ENCODE measurements at regions of chr5 and their contacts with region 1.

Region 1: GRCh38 chr5:140710899-140711552 is 10.8 kb downstream of the ZMAT2 start:
- DNase-seq: peak; percentile 90 to 98 (median 95)
- H3K4me3 ChIP-seq: peak overlapping the region; percentile 85 to 96 (median 86)
- H3K4me3 Mint-ChIP-seq: peak overlapping the region; percentile 90 to 95
- H3K27ac ChIP-seq: peak overlapping the region; percentile 85 to 86
- H3K27ac Mint-ChIP-seq: peak overlapping the region; percentile 85 to 99 (median 98)
- H3K4me1 ChIP-seq: peaks cover 5 to 13% of the 10 kb centered on the region in 2 donors
- H3K4me1 Mint-ChIP-seq: peaks cover 13% of the 10 kb centered on the region
- H3K27me3 ChIP-seq: no peaks in the 10 kb centered on the region
- H3K27me3 Mint-ChIP-seq: peaks cover 1 to 7% (median 5%) of the 10 kb centered on the region in 3 donors
- CTCF ChIP-seq: no peak

Region 2: GRCh38 chr5:140362860-140363630 is 348.0 kb before region 1 on chr5:
- intact Hi-C with region 1: loop called in 1 of 2 experiments (anchors 10 kb)
- DNase-seq: peak; percentile 71 to 85 (median 79)
- H3K4me3 ChIP-seq: no peak overlapping the region
- H3K4me3 Mint-ChIP-seq: peak overlapping the region; percentile 41 to 79
- H3K27ac ChIP-seq: no peak overlapping the region
- H3K27ac Mint-ChIP-seq: peak overlapping the region in 2 of 7 donors; percentile 40 to 63
- H3K4me1 ChIP-seq: peaks cover 4 to 5% of the 10 kb centered on the region in 2 donors
- H3K4me1 Mint-ChIP-seq: peaks cover 5% of the 10 kb centered on the region
- H3K27me3 ChIP-seq: no peaks in the 10 kb centered on the region
- H3K27me3 Mint-ChIP-seq: peaks cover 2 to 9% (median 4%) of the 10 kb centered on the region in 3 donors
- CTCF ChIP-seq: peak; percentile 98

Region 3: DNA sequence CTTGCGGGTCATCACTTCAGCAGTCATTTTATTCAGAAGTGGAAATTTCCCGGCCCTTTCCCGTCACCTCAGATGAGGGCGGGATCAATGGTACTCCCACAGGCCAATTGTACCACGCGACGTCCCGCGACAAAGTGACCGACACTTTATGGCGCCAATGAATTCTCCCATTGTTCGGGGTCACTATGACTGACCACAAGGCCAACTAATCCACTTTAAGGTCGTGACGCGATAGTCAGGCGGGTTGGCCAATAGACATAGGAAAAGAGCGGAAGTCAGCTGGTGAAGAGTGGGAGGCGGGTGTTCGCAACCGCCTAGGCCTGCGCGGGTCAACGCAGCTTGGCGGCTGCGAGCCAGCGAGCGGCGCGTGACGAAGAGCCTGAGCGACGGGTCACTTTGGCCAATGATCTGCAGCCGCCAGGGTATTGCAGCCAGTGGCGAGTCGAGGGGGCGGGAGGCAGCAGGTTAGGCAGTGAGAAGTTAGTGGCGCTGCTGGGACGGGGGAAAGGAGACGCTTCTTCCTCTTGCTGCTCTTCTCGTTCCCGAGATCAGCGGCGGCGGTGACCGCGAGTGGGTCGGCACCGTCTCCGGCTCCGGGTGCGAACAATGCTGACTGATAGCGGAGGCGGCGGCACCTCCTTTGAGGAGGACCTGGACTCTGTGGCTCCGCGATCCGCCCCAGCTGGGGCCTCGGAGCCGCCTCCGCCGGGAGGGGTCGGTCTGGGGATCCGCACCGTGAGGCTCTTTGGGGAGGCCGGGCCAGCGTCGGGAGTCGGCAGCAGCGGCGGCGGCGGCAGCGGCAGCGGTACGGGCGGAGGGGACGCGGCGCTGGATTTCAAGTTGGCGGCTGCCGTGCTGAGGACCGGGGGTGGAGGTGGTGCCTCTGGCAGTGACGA is 309.4 kb before region 1 on chr5 and contains the start of gene ANKHD1:
- intact Hi-C with region 1: loop called in 1 of 2 experiments (anchors 5 kb)
- DNase-seq: peak; percentile 100
- H3K4me3 ChIP-seq: peak within 1 kb of the TSS; percentile 67 to 87 (median 86)
- H3K4me3 Mint-ChIP-seq: no peak within 1 kb of the TSS
- H3K27ac ChIP-seq: peak within 1 kb of the TSS; percentile 94
- H3K27ac Mint-ChIP-seq: peak within 1 kb of the TSS in 2 of 7 donors; percentile 92 to 93
- H3K4me1 ChIP-seq: peaks cover 23 to 32% of the 10 kb centered on the region in 2 donors
- H3K4me1 Mint-ChIP-seq: peaks cover 32% of the 10 kb centered on the region
- H3K27me3 ChIP-seq: no peaks in the 10 kb centered on the region
- H3K27me3 Mint-ChIP-seq: no peaks in the 10 kb centered on the region
- CTCF ChIP-seq: no peak
- polyA plus RNA-seq, gene ANKHD1: 29.0 to 110 (median 43.6) TPM

Region 4: DNA sequence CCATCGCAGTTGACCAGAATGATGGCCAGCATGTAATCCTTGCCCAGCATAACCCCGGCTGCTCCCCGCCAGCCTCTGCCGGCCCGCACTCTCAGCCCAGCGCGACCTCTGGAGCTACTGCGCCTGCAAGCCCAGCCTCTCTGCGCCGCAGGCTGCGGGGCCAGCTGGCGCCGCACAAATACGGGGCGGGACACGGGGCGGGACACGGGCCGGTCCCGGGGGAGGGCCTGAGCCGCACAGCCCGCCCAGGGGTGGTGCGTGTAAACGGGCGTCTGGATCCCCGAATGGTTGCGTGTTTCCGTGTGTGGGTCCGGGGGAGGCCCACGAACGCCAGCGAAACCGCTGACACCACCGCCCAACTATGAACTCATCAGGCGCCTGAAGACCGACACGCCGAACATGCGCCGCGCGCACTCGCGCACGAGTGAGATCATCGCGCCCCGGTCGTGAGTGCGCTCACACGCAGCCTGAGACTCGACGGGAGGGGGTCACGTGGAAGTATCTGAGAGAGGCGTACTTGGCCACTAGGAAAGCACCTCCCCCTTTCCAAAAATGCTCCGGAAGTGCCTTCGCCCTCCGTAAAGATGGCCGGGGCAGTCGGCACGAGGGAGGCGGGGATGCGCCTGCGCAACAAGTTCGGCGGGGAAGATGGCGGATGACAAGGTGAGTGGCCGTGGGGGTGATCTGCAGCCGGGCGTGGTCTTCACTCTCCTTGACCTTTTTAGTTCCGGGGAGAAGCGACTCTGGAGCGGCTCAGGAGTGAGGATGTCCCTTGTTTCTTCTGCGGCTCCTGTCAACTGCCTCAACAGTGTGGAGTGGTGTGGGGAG is 146.6 kb before region 1 on chr5 and contains the starts of genes APBB3 and SLC35A4:
- intact Hi-C with region 1: loop called in 1 of 2 experiments (anchors 10 kb)
- DNase-seq: peak; percentile 99 to 100 (median 100)
- H3K4me3 ChIP-seq: peak within 1 kb of the TSS; percentile 77 to 87 (median 83)
- H3K4me3 Mint-ChIP-seq: peak within 1 kb of the TSS; percentile 91 to 98
- H3K27ac ChIP-seq: peak within 1 kb of the TSS; percentile 92
- H3K27ac Mint-ChIP-seq: peak within 1 kb of the TSS; percentile 97 to 99 (median 98)
- H3K4me1 ChIP-seq: peaks cover 33 to 65% of the 10 kb centered on the region in 2 donors
- H3K4me1 Mint-ChIP-seq: peaks cover 58% of the 10 kb centered on the region
- H3K27me3 ChIP-seq: no peaks in the 10 kb centered on the region
- H3K27me3 Mint-ChIP-seq: peaks cover 0 to 2% (median 2%) of the 10 kb centered on the region in 3 donors
- CTCF ChIP-seq: no peak
- polyA plus RNA-seq, gene APBB3: 4.9 to 211 (median 7.4) TPM
- polyA plus RNA-seq, gene SLC35A4: 44.0 to 67.1 (median 58.8) TPM

Region 5: GRCh38 chr5:140800816-140801493 is 89.9 kb after region 1 on chr5 and contains the start of gene PCDHA3:
- intact Hi-C with region 1: no loop called
- DNase-seq: no peak
- H3K4me3 ChIP-seq: peak within 1 kb of the TSS in 1 of 3 experiments; percentile 23
- H3K4me3 Mint-ChIP-seq: no peak within 1 kb of the TSS
- H3K27ac ChIP-seq: no peak within 1 kb of the TSS
- H3K27ac Mint-ChIP-seq: no peak within 1 kb of the TSS
- H3K4me1 ChIP-seq: no peaks in the 10 kb centered on the region
- H3K4me1 Mint-ChIP-seq: no peaks in the 10 kb centered on the region
- H3K27me3 ChIP-seq: peaks cover 0 to 26% of the 10 kb centered on the region in 2 donors
- H3K27me3 Mint-ChIP-seq: peaks cover 5 to 25% (median 21%) of the 10 kb centered on the region in 3 donors
- CTCF ChIP-seq: no peak
- polyA plus RNA-seq, gene PCDHA3: not detected

Measured in CD14-positive monocyte (primary cell).